ENCODE measurements at regions of chr4 and their contacts with region 1.

Region 1: DNA sequence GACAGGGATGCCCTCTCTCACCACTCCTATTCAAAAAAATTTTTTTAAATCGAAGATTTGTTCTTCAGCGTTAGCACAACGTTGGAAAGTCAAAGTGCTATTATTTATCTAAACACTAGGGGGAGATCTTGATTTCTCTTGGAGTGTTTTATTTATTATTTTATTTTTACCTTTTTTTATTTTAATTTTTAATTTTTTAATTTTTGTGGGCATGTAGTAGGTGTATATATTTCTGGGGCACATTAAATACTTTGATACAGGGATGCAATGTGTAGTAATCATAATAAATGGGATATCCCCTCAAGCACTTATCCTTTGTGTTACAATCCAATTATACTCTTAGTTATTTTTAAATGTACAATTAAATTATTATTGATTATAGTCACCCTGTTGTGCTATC is 37.4 kb upstream of the SLC10A4 start:
- DNase-seq: no peak
- ATAC-seq: no peak
- H3K4me3 ChIP-seq: no peak overlapping the region
- H3K27ac ChIP-seq: no peak overlapping the region
- H3K4me1 ChIP-seq: no peaks in the 10 kb centered on the region
- H3K27me3 ChIP-seq: no peaks in the 10 kb centered on the region

Region 2: DNA sequence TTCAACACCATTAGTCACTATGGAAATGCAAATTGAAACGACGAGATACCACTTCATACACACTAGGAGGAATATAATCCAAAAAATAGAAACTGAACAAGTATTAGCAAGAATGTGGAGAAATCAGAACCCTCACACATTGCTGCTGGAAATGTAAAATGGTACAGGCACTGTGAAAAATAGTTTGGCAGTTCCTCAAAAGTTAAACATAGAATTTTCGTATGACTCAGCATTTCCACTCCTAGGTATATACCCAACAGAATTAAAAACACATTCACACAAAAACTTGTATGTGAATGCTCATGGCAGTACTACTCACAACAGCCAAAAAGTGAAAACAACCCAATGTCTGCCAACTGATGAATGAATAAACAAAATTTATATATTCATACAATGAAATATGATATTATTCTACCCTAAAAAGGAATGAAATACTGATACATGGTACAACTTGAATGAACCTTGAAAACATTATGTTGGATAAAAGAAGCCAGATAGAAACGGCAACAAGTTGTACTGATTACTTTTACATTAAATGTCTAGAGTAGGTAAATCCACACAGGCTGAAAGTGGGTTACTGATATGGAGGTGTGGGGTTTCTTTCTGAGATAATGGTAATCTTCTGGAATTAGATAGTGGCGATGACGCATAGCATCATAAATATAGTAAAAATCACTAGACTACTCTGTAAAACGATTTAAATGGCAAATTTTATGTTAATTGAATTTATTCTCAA is 198.4 kb before region 1 on chr4:
- intact Hi-C with region 1: no loop called
- DNase-seq: no peak
- ATAC-seq: no peak
- H3K4me3 ChIP-seq: no peak overlapping the region
- H3K27ac ChIP-seq: no peak overlapping the region
- H3K4me1 ChIP-seq: peaks cover 0 to 3% of the 10 kb centered on the region in 2 donors
- H3K27me3 ChIP-seq: no peaks in the 10 kb centered on the region

Region 3: GRCh38 chr4:48490012-48490679 is 44.4 kb after region 1 on chr4 and contains the start of gene ZAR1:
- intact Hi-C with region 1: no loop called
- DNase-seq: no peak
- ATAC-seq: no peak
- H3K4me3 ChIP-seq: peak within 1 kb of the TSS in 1 of 2 donors; percentile 22
- H3K27ac ChIP-seq: no peak within 1 kb of the TSS
- H3K4me1 ChIP-seq: no peaks in the 10 kb centered on the region
- H3K27me3 ChIP-seq: no peaks in the 10 kb centered on the region
- total RNA-seq, gene ZAR1: not detected

Region 4: GRCh38 chr4:48546336-48546735 is 100.6 kb after region 1 on chr4:
- intact Hi-C with region 1: loop called in 1 of 2 experiments (anchors 10 kb)
- DNase-seq: no peak
- ATAC-seq: no peak
- H3K4me3 ChIP-seq: no peak overlapping the region
- H3K27ac ChIP-seq: no peak overlapping the region
- H3K4me1 ChIP-seq: no peaks in the 10 kb centered on the region
- H3K27me3 ChIP-seq: no peaks in the 10 kb centered on the region